Transverse colon (tissue), 4 donors: ENCODE measurements at regions of chr7 and their contacts with region 1.

Region 1: GRCh38 chr7:107304636-107305035 is 135.8 kb downstream of the HBP1 start:
- DNase-seq: no peak
- H3K4me3 ChIP-seq: no peak overlapping the region
- H3K27ac ChIP-seq: no peak overlapping the region
- H3K4me1 ChIP-seq: no peaks in the 10 kb centered on the region
- H3K27me3 ChIP-seq: no peaks in the 10 kb centered on the region
- CTCF ChIP-seq: no peak
- EP300 ChIP-seq: no peak
- POLR2A ChIP-seq: no peak

Region 2: DNA sequence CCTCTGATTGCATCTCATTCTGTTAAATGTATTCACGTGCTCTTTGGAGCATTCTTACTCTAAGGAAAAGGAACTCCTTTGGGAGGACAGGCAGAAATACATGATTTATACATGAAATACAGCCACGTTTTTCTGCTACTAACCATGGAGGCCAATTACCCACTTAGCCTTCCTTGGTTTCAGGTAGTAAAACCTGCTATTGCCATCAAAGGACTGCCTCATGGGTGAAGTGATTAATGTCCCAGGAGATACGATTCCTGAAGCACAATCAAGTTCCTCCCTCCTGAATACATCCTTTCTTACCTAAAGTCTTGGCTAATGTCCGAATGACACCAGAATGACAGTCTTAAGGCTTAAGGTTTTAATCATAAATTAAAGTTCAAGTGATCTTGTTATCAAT is 498.1 kb before region 1 on chr7:
- in situ Hi-C with region 1: no loop called
- intact Hi-C with region 1: no loop called
- DNase-seq: no peak
- H3K4me3 ChIP-seq: no peak overlapping the region
- H3K27ac ChIP-seq: no peak overlapping the region
- H3K4me1 ChIP-seq: no peaks in the 10 kb centered on the region
- H3K27me3 ChIP-seq: no peaks in the 10 kb centered on the region
- CTCF ChIP-seq: no peak
- EP300 ChIP-seq: no peak
- POLR2A ChIP-seq: no peak

Region 3: GRCh38 chr7:107344799-107345198 is 40.2 kb after region 1 on chr7:
- in situ Hi-C with region 1: loop called in 1 of 4 experiments (anchors 5 kb)
- intact Hi-C with region 1: no loop called
- DNase-seq: no peak
- H3K4me3 ChIP-seq: no peak overlapping the region
- H3K27ac ChIP-seq: no peak overlapping the region
- H3K4me1 ChIP-seq: no peaks in the 10 kb centered on the region
- H3K27me3 ChIP-seq: no peaks in the 10 kb centered on the region
- CTCF ChIP-seq: no peak
- EP300 ChIP-seq: no peak
- POLR2A ChIP-seq: no peak